ENCODE measurements at regions of chr2 and their contacts with region 1.

Region 1: GRCh38 chr2:61125123-61125710 is 36.8 kb upstream of the C2orf74 start:
- DNase-seq: no peak

Region 2: DNA sequence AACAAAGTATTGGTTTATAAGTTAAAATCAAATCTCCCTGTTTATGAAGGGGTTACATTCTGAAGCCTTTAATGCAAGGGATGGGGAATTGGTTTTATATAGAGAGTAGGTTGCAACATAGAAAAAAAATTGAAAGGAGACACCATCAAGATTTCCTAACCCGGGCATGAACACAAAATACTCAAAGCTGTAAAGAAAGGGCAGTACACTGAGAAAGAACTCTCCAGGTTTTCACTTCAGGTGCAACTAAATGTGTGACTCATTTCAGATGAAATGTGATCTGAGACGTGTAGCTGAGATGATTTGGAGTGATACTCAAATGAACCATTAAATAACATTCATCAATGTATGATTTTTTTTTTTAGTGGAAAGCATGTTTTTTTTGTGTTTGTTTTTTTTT is 15.9 kb before region 1 on chr2:
- CTCF ChIA-PET with region 1: no interaction called
- POLR2A ChIA-PET with region 1: no interaction called
- DNase-seq: no peak

Region 3: DNA sequence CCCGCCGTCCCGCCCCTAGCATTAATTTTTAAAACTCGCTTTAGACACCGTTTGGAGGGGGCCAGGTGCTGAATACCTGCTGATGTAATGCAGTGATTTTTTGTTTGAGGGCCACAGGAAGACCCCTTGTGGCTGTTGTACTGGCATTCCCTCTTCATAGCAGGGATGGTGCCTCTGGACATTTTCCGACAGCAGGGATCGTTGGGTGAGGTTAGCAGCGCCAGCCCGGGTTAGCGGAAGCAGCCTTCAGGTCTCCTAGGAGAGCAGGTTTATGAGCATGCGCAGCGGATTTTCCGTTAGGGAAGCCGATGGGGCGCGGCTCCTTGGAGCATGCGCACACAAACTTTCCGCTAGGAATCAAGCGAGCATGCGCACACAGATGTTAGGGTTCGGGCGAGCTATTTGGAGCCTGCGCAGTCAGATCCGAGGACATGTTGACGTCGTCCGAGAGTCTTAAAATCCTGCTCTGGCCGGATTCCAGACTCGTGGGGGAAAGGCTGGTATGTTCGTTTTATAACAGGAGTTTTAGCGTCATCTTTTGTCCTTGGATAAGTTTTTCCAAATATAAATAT is 19.6 kb after region 1 on chr2:
- CTCF ChIA-PET with region 1: no interaction called
- POLR2A ChIA-PET with region 1: interaction called, 11 read pairs
- DNase-seq: peak; percentile 90

Measured in HEK293T (cell line).